Activated B cell treated with CpG ODN at 0.5 μM for 24 hours (primary cell): ENCODE measurements at regions of chr7 and their contacts with region 1.

Region 1: GRCh38 chr7:107743567-107744344 is at the start of gene CBLL1:
- DNase-seq: peak; percentile 97
- ATAC-seq: peak; percentile 89
- H3K4me3 Mint-ChIP-seq: peak within 1 kb of the TSS; percentile 96
- H3K27ac Mint-ChIP-seq: peak within 1 kb of the TSS; percentile 99
- H3K4me1 Mint-ChIP-seq: peaks cover 53% of the 10 kb centered on the region
- H3K27me3 Mint-ChIP-seq: no peaks in the 10 kb centered on the region
- CTCF ChIP-seq: no peak
- total RNA-seq, gene CBLL1: 35.3 and 47.2 TPM in 2 replicates

Region 2: GRCh38 chr7:106865130-106866041 is 878.4 kb before region 1 on chr7 and contains the start of gene PIK3CG:
- CTCF ChIA-PET with region 1: no interaction called
- POLR2A ChIA-PET with region 1: no interaction called
- intact Hi-C with region 1: loop called (anchors 1 kb)
- DNase-seq: no peak
- ATAC-seq: peak; percentile 83
- H3K4me3 Mint-ChIP-seq: peak within 1 kb of the TSS; percentile 91
- H3K27ac Mint-ChIP-seq: peak within 1 kb of the TSS; percentile 90
- H3K4me1 Mint-ChIP-seq: peaks cover 71% of the 10 kb centered on the region
- H3K27me3 Mint-ChIP-seq: no peaks in the 10 kb centered on the region
- CTCF ChIP-seq: no peak
- total RNA-seq, gene PIK3CG: 62.0 and 63.6 TPM in 2 replicates

Region 3: DNA sequence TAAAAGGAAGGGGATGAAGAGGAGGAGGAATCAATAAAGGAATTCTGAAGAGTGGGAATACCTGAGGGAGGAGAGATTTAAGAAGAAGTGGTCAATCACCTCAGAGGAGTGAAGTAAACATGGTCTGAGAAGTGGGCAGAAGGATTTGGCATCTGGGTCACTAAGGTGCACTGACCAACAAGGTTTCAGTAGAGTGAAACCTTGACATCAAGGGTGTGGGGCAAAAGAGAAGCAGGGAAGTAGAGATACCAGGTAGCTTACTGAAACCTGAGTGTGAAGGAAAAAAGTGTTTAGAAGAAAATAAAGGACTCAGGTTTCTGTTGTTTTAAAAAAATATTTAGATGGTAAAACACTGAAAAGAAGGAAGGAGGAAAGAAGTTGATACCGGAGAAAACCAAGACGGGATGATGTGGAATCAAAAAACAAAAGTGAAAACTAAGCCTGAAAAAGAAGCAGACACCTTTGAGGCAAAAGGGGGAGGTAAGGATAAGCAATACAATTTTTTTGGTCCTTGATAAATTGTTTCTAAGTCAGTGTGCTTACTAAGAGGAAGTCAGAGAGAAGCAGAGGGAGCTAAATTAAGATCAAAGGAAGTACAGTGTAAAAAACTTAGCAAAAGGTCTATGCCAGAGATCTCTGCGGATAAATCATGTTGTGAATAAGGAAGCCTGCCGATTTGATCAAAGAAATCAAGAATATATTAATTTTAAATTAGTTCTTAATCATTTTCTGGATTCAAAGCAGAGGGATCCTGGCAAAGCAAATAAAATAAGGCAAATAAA is 411.1 kb before region 1 on chr7:
- CTCF ChIA-PET with region 1: no interaction called
- POLR2A ChIA-PET with region 1: no interaction called
- intact Hi-C with region 1: no loop called
- DNase-seq: no peak
- ATAC-seq: peak; percentile 31
- H3K4me3 Mint-ChIP-seq: peak overlapping the region; percentile 69
- H3K27ac Mint-ChIP-seq: peak overlapping the region; percentile 59
- H3K4me1 Mint-ChIP-seq: peaks cover 31% of the 10 kb centered on the region
- H3K27me3 Mint-ChIP-seq: no peaks in the 10 kb centered on the region
- CTCF ChIP-seq: no peak

Region 4: GRCh38 chr7:107563775-107564552 is 179.8 kb before region 1 on chr7 and contains the starts of genes COG5 and DUS4L:
- CTCF ChIA-PET with region 1: no interaction called
- POLR2A ChIA-PET with region 1: interaction called, 28 read pairs
- intact Hi-C with region 1: loop called (anchors 1 kb)
- DNase-seq: peak; percentile 83
- ATAC-seq: peak; percentile 93
- H3K4me3 Mint-ChIP-seq: peak within 1 kb of the TSS; percentile 93
- H3K27ac Mint-ChIP-seq: peak within 1 kb of the TSS; percentile 82
- H3K4me1 Mint-ChIP-seq: peaks cover 43% of the 10 kb centered on the region
- H3K27me3 Mint-ChIP-seq: no peaks in the 10 kb centered on the region
- CTCF ChIP-seq: no peak
- total RNA-seq, gene COG5: 40.6 and 47.0 TPM in 2 replicates
- total RNA-seq, gene DUS4L: 11.0 and 14.6 TPM in 2 replicates

Region 5: DNA sequence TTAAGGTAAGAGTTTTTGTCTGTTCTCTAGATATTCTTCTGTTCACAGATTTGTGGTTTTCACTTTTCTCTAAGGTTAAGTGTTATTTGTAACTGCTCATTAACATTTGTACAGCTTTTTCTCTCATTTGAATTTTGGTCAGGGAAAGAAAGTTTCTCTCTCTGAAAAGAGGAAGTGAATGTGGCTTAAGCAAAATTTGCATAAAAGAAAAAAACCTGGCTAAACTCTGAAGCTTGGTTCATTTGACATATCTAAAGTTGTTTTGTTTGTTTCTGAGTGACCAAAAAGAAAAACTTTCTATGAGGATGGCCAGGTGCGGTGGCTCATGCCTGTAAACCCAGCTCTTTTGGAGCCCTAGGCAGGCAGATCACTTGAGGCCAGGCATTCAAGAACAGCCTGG is 105.2 kb before region 1 on chr7:
- CTCF ChIA-PET with region 1: no interaction called
- POLR2A ChIA-PET with region 1: interaction called, 8 read pairs
- intact Hi-C with region 1: loop called (anchors 2 kb)
- DNase-seq: no peak
- ATAC-seq: peak; percentile 77
- H3K4me3 Mint-ChIP-seq: peak overlapping the region; percentile 75
- H3K27ac Mint-ChIP-seq: peak overlapping the region; percentile 95
- H3K4me1 Mint-ChIP-seq: peaks cover 65% of the 10 kb centered on the region
- H3K27me3 Mint-ChIP-seq: no peaks in the 10 kb centered on the region
- CTCF ChIP-seq: no peak

Region 6: GRCh38 chr7:107879400-107880035 is 135.8 kb after region 1 on chr7:
- CTCF ChIA-PET with region 1: interaction called, 4 read pairs
- POLR2A ChIA-PET with region 1: no interaction called
- intact Hi-C with region 1: loop called (anchors 2 kb)
- DNase-seq: no peak
- ATAC-seq: peak; percentile 74
- H3K4me3 Mint-ChIP-seq: no peak overlapping the region
- H3K27ac Mint-ChIP-seq: no peak overlapping the region
- H3K4me1 Mint-ChIP-seq: peaks cover under 1% of the 10 kb centered on the region
- H3K27me3 Mint-ChIP-seq: peaks cover 20% of the 10 kb centered on the region
- CTCF ChIP-seq: no peak

Region 7: GRCh38 chr7:108146070-108146837 is 402.5 kb after region 1 on chr7:
- CTCF ChIA-PET with region 1: interaction called, 6 read pairs
- POLR2A ChIA-PET with region 1: interaction called, 4 read pairs
- intact Hi-C with region 1: loop called (anchors 2 kb)
- DNase-seq: no peak
- ATAC-seq: peak; percentile 67
- H3K4me3 Mint-ChIP-seq: no peak overlapping the region
- H3K27ac Mint-ChIP-seq: no peak overlapping the region
- H3K4me1 Mint-ChIP-seq: no peaks in the 10 kb centered on the region
- H3K27me3 Mint-ChIP-seq: peaks cover 7% of the 10 kb centered on the region
- CTCF ChIP-seq: peak; percentile 94

Region 8: GRCh38 chr7:108569381-108570145 is 825.8 kb after region 1 on chr7 and contains the starts of genes DNAJB9 and THAP5:
- CTCF ChIA-PET with region 1: no interaction called
- POLR2A ChIA-PET with region 1: no interaction called
- intact Hi-C with region 1: loop called (anchors 1 kb)
- DNase-seq: peak; percentile 97
- ATAC-seq: peak; percentile 89
- H3K4me3 Mint-ChIP-seq: peak within 1 kb of the TSS; percentile 98
- H3K27ac Mint-ChIP-seq: peak within 1 kb of the TSS; percentile 99
- H3K4me1 Mint-ChIP-seq: peaks cover 66% of the 10 kb centered on the region
- H3K27me3 Mint-ChIP-seq: no peaks in the 10 kb centered on the region
- CTCF ChIP-seq: no peak
- total RNA-seq, gene DNAJB9: 9.0 and 9.9 TPM in 2 replicates
- total RNA-seq, gene THAP5: 22.1 and 26.3 TPM in 2 replicates